ENCODE measurements at regions of chr16 and their contacts with region 1.

Region 1: DNA sequence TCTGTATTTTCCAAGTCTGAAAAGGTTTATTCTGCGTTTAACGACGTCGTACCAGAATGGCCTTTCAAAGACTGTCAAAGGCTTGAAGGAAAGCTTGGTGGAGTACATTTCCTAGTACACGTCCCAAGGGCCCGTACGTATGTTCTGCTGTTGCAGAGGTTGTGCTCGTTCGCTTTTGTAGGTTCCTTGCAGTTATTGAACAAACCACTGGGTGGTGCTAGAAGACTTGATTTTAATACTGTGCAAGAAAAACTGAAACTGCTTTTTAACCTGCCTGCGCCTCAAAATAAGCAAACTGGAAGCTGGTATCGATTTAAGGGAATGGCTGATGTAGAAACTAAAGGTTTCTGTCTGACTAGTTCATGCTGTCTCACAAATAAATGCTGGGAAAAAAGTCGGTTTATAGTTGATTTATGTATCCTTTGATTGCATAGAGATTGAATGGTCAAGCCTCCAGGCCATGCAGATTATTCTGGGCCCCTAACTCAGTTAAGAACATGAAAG is 54.6 kb downstream of the USP10 start:
- DNase-seq: peak; percentile 87
- ATAC-seq: peak; percentile 86
- H3K4me3 Mint-ChIP-seq: peak overlapping the region; percentile 41
- H3K27ac Mint-ChIP-seq: no peak overlapping the region
- H3K4me1 Mint-ChIP-seq: peaks cover 62% of the 10 kb centered on the region
- H3K27me3 Mint-ChIP-seq: no peaks in the 10 kb centered on the region

Region 2: DNA sequence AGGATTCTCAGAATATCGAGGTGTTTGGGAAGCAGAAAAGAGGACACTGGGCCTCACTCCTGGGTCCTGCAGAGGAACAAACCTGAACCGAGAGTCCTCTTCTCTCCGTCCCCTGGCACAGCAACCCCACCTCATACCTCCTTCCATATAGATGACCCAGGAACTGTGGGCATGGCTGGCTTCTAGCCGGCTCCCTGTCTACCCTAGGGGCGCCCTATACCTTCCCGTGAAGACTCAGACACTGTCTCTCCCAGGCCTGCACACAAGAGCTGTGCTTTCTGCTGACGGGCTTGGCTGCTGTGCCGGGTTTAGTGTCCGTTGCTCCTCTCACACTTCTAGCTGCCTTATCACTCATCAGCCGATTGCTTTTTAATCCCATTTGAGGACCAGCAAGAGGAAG is 18.9 kb after region 1 on chr16:
- CTCF ChIA-PET with region 1: interaction called, 20 read pairs
- POLR2A ChIA-PET with region 1: no interaction called
- DNase-seq: no peak
- ATAC-seq: no peak
- H3K4me3 Mint-ChIP-seq: no peak overlapping the region
- H3K27ac Mint-ChIP-seq: no peak overlapping the region
- H3K4me1 Mint-ChIP-seq: peaks cover 12% of the 10 kb centered on the region
- H3K27me3 Mint-ChIP-seq: no peaks in the 10 kb centered on the region

Region 3: GRCh38 chr16:84819644-84820324 is 65.4 kb after region 1 on chr16 and contains the start of gene CRISPLD2:
- CTCF ChIA-PET with region 1: interaction called, 10 read pairs
- POLR2A ChIA-PET with region 1: no interaction called
- DNase-seq: peak; percentile 85
- ATAC-seq: peak; percentile 99
- H3K4me3 Mint-ChIP-seq: peak within 1 kb of the TSS; percentile 50
- H3K27ac Mint-ChIP-seq: no peak within 1 kb of the TSS
- H3K4me1 Mint-ChIP-seq: peaks cover 8% of the 10 kb centered on the region
- H3K27me3 Mint-ChIP-seq: peaks cover 44% of the 10 kb centered on the region
- total RNA-seq, gene CRISPLD2: not detected

Region 4: GRCh38 chr16:84952335-84953189 is 198.2 kb after region 1 on chr16:
- CTCF ChIA-PET with region 1: interaction called, 136 read pairs
- POLR2A ChIA-PET with region 1: no interaction called
- DNase-seq: peak; percentile 81
- ATAC-seq: peak; percentile 83
- H3K4me3 Mint-ChIP-seq: no peak overlapping the region
- H3K27ac Mint-ChIP-seq: no peak overlapping the region
- H3K4me1 Mint-ChIP-seq: peaks cover 6% of the 10 kb centered on the region
- H3K27me3 Mint-ChIP-seq: peaks cover 7% of the 10 kb centered on the region